Activated naive CD4-positive, alpha-beta T cell treated with anti-CD3 and anti-CD28 coated beads for 36 hours (primary cell): ENCODE measurements at regions of chr14 and their contacts with region 1.

Region 1: GRCh38 chr14:54893151-54893760 is 9.4 kb downstream of the GCH1 start:
- DNase-seq: peak; percentile 63
- H3K4me3 Mint-ChIP-seq: no peak overlapping the region
- H3K27ac Mint-ChIP-seq: no peak overlapping the region
- H3K4me1 Mint-ChIP-seq: peaks cover 49% of the 10 kb centered on the region
- H3K27me3 Mint-ChIP-seq: no peaks in the 10 kb centered on the region

Region 2: GRCh38 chr14:54839701-54840119 is 53.5 kb before region 1 on chr14:
- CTCF ChIA-PET with region 1: interaction called, 4 read pairs
- intact Hi-C with region 1: loop called (anchors 1 kb)
- DNase-seq: no peak
- H3K4me3 Mint-ChIP-seq: no peak overlapping the region
- H3K27ac Mint-ChIP-seq: peak overlapping the region; percentile 31
- H3K4me1 Mint-ChIP-seq: no peaks in the 10 kb centered on the region
- H3K27me3 Mint-ChIP-seq: no peaks in the 10 kb centered on the region

Region 3: DNA sequence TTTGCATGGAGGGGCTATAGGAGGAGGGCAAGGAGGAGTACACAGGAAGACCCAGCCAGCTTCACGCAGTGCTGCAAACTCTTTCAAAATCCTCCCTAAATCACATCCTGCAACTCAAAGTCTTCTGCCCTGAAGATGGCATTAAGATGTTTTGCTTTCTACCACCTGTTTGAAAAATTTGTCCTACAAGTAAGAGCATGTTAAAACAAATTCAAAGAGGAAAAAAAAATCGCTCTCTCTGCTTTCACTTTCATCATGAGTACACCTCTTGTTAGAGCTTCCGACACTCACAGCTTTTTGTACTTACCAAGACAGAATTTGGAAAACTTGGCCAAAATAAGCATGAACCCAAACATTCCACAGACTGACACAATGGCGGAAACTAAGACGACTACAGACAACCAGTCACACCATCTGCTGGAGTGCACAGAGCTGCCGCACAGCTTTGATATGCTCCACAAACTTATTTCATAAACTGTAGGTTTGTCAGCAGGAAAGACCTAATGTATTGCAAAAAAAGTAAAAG is 12.0 kb before region 1 on chr14:
- CTCF ChIA-PET with region 1: interaction called, 17 read pairs
- intact Hi-C with region 1: loop called (anchors 1 kb)
- DNase-seq: peak; percentile 38
- H3K4me3 Mint-ChIP-seq: peak overlapping the region; percentile 78
- H3K27ac Mint-ChIP-seq: peak overlapping the region; percentile 96
- H3K4me1 Mint-ChIP-seq: peaks cover 34% of the 10 kb centered on the region
- H3K27me3 Mint-ChIP-seq: no peaks in the 10 kb centered on the region